Activated B cell treated with CpG ODN at 0.5 μM for 24 hours (primary cell): ENCODE measurements at regions of chr5 and their contacts with region 1.

Region 1: GRCh38 chr5:65774346-65774745 is 52.3 kb downstream of the NLN start:
- DNase-seq: no peak
- ATAC-seq: no peak
- H3K4me3 Mint-ChIP-seq: no peak overlapping the region
- H3K27ac Mint-ChIP-seq: no peak overlapping the region
- H3K4me1 Mint-ChIP-seq: peaks cover 3% of the 10 kb centered on the region
- H3K27me3 Mint-ChIP-seq: no peaks in the 10 kb centered on the region
- CTCF ChIP-seq: no peak

Region 2: GRCh38 chr5:65809817-65810531 is 35.6 kb after region 1 on chr5:
- CTCF ChIA-PET with region 1: no interaction called
- POLR2A ChIA-PET with region 1: no interaction called
- intact Hi-C with region 1: no loop called
- DNase-seq: no peak
- ATAC-seq: no peak
- H3K4me3 Mint-ChIP-seq: no peak overlapping the region
- H3K27ac Mint-ChIP-seq: no peak overlapping the region
- H3K4me1 Mint-ChIP-seq: peaks cover 4% of the 10 kb centered on the region
- H3K27me3 Mint-ChIP-seq: no peaks in the 10 kb centered on the region
- CTCF ChIP-seq: no peak

Region 3: DNA sequence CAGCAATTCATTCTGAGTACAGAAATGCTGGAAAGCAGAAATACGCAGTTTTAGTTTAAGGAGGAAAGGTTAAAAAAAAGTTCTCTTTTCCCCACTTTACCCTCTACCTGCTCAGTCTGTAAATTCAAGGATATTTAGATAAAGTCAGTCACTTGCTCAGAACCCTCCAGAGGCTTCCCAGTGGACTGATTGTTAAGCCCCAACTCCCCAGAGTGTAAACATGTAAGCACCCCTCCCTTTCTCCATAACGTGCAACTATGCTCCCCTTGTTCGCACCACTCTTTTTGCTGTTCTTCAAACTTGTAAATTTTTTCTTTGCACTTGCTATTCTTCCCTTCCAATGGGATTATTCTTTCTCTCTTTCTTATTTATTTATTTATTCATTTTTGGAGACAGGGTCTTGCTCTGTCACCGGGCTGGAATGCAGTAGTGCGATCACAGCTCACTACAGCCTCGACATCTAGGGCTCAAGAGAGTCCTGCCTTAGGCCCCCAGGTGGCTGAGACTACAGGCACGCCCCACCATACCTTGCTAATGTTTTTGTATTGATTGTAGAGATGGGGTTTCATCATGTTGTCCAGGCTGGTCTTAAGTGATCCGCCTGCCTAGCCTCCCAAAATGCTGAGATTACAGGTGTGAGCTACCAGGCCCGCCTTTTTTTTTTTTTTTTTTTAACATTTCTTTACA is 119.5 kb after region 1 on chr5:
- CTCF ChIA-PET with region 1: no interaction called
- POLR2A ChIA-PET with region 1: interaction called, 10 read pairs
- intact Hi-C with region 1: no loop called
- DNase-seq: no peak
- ATAC-seq: no peak
- H3K4me3 Mint-ChIP-seq: no peak overlapping the region
- H3K27ac Mint-ChIP-seq: no peak overlapping the region
- H3K4me1 Mint-ChIP-seq: no peaks in the 10 kb centered on the region
- H3K27me3 Mint-ChIP-seq: peaks cover 3% of the 10 kb centered on the region
- CTCF ChIP-seq: no peak